PC-9 (cell line): ENCODE measurements at regions of chrX and their contacts with region 1.

Region 1: DNA sequence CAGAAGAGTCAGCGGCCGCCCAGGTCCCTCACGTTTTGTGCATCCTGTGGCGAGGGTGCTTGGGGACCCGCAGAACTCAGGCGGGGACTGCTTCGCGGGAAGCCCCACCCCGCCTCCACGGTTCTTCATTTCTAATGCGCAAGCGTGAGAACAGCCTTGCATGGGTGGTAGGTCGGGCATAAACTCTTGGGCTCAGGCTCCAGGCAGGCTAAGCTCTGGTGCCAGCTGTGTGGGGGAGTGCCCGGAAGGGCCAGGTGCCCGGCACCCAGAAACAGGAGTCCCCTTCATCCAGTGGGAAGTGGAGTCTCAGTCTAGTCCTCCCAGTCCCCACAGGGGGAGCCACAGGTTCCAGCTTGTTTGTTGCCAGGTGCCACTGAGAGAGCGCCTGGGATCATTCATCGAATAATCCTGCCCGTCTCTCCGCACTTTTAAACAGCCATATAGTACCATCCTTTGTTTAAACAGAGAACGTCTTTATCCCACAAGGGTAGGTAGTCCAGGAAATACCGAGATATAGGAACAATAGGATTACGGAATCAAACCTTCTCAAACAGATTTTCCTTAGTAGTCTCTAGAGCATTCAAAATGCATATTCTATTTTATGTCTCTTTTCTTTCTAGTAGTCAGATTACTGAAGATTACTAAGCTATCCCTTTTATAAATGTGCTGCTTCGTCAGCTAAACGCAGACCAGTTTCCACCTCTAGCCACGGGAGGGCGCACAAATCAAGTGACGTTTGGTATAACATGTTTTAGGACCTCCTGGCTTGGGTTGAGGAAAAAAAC is 12.7 kb upstream of the RBBP7 start:
- DNase-seq: peak; percentile 56 to 65
- H3K4me3 ChIP-seq: peak overlapping the region; percentile 70
- H3K27ac ChIP-seq: peak overlapping the region; percentile 71
- H3K4me1 ChIP-seq: 0 out of 2 replicates have a peak, but pooled peaks cover 4% of the 10 kb centered on the region
- H3K27me3 ChIP-seq: no peaks in the 10 kb centered on the region
- CTCF ChIP-seq: peak; percentile 83

Region 2: GRCh38 chrX:16870095-16870860 is 12.6 kb before region 1 on chrX and contains the start of gene RBBP7:
- CTCF ChIA-PET with region 1: no interaction called
- POLR2A ChIA-PET with region 1: interaction called, 5 read pairs
- intact Hi-C with region 1: loop called (anchors 1 kb)
- DNase-seq: peak; percentile 74 to 94
- H3K4me3 ChIP-seq: peak within 1 kb of the TSS; percentile 85
- H3K27ac ChIP-seq: peak within 1 kb of the TSS; percentile 78
- H3K4me1 ChIP-seq: peaks cover 21% of the 10 kb centered on the region
- H3K27me3 ChIP-seq: no peaks in the 10 kb centered on the region
- CTCF ChIP-seq: no peak
- total RNA-seq, gene RBBP7: 152 and 197 TPM in 2 replicates

Region 3: GRCh38 chrX:16946361-16946964 is 63.6 kb after region 1 on chrX and contains the start of gene REPS2:
- CTCF ChIA-PET with region 1: no interaction called
- POLR2A ChIA-PET with region 1: no interaction called
- intact Hi-C with region 1: loop called (anchors 5 kb)
- DNase-seq: peak; percentile 77 to 83
- H3K4me3 ChIP-seq: peak within 1 kb of the TSS; percentile 66
- H3K27ac ChIP-seq: no peak within 1 kb of the TSS
- H3K4me1 ChIP-seq: peaks cover 26% of the 10 kb centered on the region; the same call in 1 of the 2 replicates
- H3K27me3 ChIP-seq: no peaks in the 10 kb centered on the region
- CTCF ChIP-seq: no peak
- total RNA-seq, gene REPS2: 15.4 and 29.2 TPM in 2 replicates